OCI-LY7 (cell line): ENCODE measurements at regions of chr2 and their contacts with region 1.

Region 1: DNA sequence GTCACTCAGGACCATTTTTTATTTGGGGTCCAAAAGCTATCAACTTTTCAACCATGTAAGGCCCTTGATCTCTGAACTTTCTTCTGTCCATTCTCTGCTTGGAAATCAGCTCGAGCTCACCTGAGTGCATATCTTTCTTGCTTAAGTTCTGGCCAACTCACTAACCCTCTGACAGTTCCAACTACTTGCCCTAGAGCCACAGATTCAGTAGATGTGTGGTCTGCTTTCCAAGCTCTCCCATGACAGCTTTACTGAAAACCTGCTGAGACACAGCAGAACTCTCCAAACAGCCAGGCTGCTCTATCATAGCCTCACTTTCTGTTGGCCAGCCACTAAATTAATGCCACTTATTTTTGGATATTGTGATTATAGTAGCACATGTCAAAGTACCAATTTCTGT is 21.2 kb upstream of the IKZF2 start:
- DNase-seq: no peak
- H3K4me3 ChIP-seq: no peak overlapping the region
- H3K27ac ChIP-seq: no peak overlapping the region
- H3K4me1 ChIP-seq: peaks cover 6% of the 10 kb centered on the region
- CTCF ChIP-seq: no peak

Region 2: GRCh38 chr2:213185147-213185822 is 12.6 kb after region 1 on chr2:
- CTCF ChIA-PET with region 1: no interaction called
- POLR2A ChIA-PET with region 1: interaction called, 17 read pairs
- intact Hi-C with region 1: no loop called
- DNase-seq: peak; percentile 37
- H3K4me3 ChIP-seq: no peak overlapping the region
- H3K27ac ChIP-seq: no peak overlapping the region
- H3K4me1 ChIP-seq: peaks cover 25% of the 10 kb centered on the region
- CTCF ChIP-seq: no peak